ENCODE measurements at regions of chr5 and their contacts with region 1.

Region 1: DNA sequence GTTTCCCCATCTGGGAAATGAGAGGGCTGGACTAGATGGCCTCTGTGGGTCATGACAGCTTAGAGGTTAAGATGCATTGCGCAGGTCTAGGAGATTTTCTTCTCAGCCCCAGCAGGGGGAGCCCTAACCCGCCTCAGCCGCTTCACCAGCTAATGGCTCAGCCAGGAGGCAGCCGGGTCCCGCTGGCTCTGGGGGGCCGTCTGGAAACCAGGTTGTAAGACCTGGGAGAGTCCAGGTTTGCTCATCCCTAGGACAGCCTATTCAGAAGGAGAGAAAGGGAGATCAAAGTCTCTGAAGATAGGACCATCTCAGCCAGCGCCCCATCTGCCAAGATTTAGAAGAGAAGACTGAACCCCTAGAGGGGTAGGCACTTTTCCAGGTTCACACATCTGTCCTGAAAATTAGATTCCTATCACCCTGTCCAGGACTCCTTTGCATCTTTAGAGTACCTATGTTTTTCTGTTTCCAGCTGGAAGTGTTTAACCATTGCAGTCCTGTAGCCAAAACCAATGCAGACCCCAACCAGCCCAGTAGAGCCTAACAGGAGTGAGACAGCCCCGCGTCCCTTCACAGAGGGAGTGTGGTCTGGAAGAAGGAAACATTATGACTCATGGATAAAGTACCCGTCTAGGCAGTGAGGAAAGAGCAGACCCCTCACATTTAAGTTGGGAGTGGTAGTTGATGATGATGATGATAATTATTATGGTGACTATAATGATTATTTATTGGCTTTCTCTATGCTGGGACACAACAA is 27.5 kb downstream of the SPARC start:
- DNase-seq: peak; percentile 49
- H3K4me3 ChIP-seq: no peak overlapping the region
- H3K27ac ChIP-seq: no peak overlapping the region
- H3K4me1 ChIP-seq: no peaks in the 10 kb centered on the region
- H3K27me3 ChIP-seq: no peaks in the 10 kb centered on the region
- CTCF ChIP-seq: peak; percentile 80 to 89 (median 86)
- POLR2A ChIP-seq: no peak

Region 2: DNA sequence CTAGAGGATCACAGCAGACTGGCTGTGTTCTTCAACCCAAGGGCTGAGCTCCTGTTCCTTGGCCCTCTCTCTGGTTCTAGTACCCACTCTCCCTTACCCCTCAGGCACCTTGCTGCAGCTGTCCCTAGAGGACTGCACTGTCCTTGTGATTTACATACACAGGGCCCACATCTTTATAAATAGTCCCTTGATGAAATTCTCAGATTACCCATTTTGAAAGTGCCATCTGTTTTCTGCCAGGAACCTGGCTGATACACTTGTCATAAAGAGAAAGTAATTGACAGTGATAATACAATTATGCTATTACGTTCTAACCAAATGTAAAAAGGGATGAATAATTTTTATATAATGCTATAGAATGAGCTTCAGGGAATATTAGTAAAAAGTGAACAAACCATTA is 44.0 kb after region 1 on chr5:
- intact Hi-C with region 1: no loop called
- DNase-seq: no peak
- H3K4me3 ChIP-seq: no peak overlapping the region
- H3K27ac ChIP-seq: no peak overlapping the region
- H3K4me1 ChIP-seq: no peaks in the 10 kb centered on the region
- H3K27me3 ChIP-seq: peaks cover 2% of the 10 kb centered on the region
- CTCF ChIP-seq: no peak
- POLR2A ChIP-seq: no peak

Region 3: GRCh38 chr5:151719228-151720000 is 60.2 kb after region 1 on chr5:
- intact Hi-C with region 1: loop called (anchors 2 kb)
- DNase-seq: no peak
- H3K4me3 ChIP-seq: no peak overlapping the region
- H3K27ac ChIP-seq: no peak overlapping the region
- H3K4me1 ChIP-seq: no peaks in the 10 kb centered on the region
- H3K27me3 ChIP-seq: no peaks in the 10 kb centered on the region
- CTCF ChIP-seq: peak in 3 of 4 experiments; percentile 30 to 44 (median 40)
- POLR2A ChIP-seq: no peak

Region 4: DNA sequence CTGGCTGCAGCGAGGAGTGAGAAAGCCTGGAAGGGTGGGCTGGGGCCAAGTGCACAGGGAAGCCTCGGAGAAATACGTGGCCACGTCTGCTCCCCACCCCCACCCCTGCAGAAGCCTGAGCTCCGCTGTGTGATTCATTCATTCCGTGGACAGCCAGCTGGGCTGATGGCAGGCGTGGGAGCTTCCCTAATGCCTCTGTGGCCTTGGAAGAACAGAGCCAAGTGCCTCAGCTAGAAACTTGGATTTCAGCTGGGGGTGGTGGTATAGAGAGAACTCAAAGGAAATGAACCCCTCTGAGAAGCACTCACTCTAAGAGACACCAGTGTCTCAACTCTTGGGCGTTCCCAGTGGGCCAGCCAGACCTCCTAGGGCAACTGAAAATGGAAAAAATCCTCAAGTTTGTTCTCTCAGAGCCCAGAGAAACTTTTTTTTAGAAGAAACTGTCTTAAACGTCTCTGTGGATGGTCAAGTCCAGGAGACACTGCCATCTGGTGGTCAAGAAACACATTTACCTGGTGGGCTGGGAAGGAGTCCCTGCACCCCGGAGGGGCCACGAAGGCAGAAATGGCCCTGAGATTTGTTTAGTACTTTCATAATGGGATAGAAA is 81.3 kb after region 1 on chr5:
- intact Hi-C with region 1: loop called (anchors 1 kb)
- DNase-seq: peak; percentile 39
- H3K4me3 ChIP-seq: no peak overlapping the region
- H3K27ac ChIP-seq: peak overlapping the region; percentile 27 to 36
- H3K4me1 ChIP-seq: no peaks in the 10 kb centered on the region
- H3K27me3 ChIP-seq: no peaks in the 10 kb centered on the region
- CTCF ChIP-seq: peak; percentile 77 to 84 (median 82)
- POLR2A ChIP-seq: no peak